Posterior cingulate gyrus (tissue), 11 donors: ENCODE measurements at regions of chr1 and their contacts with region 1.

Region 1: DNA sequence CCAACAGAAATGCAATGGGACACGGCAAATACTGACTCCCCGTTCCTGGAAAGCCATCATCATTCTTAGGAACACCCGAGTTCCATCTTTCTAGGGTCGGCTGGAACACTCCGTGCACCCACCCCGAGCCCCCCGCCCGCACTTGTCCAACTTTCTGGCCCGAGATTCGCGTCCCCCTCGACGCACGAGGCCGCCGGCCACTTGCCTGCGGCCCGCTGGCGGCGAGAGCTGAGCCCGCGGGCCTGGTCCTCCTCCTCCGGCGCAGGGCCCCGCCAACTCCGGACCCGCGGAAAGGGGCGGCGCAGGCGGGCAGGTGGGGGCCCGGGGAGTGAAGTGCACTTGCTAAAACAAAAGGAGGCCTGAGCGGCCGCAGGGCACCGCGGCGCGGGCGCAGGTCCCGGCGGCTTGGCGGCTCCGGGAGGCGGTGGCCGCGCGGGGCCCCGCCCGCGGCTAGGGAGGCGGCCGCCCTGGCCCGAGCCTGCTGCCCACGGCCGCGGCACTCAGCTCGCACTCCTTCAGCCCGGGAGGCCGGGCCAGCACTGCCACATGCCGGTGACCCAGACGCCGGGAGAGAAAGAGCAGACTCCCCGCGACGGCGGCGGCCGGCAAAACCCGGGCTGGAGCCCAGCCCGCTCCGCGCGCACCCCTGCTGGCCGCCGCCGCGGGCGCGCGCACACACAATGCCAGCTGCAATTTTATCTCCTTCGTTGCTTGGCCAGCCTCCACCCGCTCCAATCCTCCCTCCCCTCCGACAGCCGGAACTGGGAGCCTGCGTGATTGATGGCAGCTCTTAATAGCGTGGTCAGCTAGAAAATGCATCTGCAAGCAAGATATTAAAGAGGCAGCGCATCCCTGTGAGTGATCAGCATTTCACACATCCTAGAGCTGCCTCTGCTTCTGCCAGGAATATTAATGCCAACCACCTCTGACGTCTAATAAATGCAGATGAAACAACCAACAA is 114.3 kb downstream of the RERE start:
- DNase-seq: peak; percentile 85 to 99 (median 88)

Region 2: DNA sequence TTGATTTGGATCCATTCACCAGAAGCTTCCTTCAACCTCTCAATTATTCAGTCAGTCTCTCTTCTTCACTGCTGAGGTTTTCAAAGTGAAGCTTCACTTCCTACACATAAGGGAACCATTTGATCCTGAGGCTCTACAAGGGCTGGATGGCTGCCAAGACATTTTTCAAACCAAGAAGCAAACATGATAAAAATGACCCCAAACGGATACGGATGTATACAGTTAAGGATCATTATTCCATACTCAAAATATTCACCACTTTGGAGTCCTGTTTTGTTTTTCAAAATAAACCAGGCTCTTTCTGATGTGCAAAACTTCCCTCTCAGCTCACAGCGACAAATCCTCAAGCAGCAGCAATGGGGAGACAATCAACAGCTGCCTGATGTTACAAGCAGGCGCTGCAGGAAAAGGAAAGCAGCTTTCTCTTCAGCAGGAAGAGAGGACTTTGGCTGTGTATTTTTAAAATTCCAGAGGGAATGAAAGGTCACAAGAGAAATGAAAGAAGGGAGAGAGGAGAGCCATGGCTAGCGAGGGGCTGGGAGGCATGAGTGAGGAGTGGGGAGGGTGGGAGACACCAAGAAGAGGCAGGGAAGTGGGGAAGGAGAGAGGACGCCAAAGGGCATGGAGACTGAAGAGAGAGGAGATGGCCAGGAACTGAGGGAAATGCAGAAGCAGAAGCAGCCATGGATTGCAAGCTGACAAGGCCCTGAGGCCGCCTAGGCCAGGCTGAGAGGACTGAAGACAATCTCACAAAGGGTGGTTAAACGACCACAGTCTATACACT is 239.8 kb before region 1 on chr1:
- intact Hi-C with region 1: loop called (anchors 10 kb)
- DNase-seq: no peak

Region 3: DNA sequence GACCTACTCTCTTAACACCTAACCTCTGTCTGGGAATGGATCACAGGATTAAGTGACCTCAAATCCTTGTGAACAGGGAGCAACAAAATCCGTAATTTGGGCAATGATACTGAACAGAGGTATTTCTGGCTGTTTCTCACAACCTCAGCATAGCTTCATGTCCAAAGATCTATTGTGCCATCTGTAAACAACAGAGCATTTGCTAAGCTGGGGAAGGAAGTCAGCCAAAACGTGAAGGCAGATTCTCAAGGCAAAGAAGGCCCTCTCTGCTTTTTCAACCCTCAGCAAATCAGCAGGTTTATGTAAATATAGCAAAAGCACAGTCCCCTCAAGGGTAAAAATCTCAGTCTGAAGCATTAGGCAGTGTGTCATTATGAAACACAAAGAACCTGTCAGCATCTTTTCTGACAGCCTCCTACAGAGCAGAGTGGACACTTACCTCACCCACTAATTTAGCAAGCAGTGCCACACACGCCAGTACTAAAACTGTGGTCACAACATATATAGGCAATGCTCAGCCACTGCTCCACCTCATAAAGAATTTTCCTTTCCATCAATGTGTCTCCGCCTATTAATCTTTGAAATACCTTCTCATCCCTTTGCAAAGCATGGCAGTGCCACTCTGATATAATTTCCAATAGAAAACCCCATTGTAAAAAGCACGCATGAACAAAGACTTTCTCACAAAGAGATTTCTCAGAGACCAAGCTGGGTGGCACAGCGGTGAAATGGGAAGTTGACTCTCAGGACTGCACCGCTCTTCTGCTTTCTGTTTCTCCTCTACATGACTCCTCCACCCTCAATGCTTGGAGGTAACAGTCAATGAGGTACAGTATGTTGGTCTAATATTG is 73.7 kb before region 1 on chr1:
- intact Hi-C with region 1: loop called (anchors 5 kb)
- DNase-seq: peak in 2 of 10 donors; percentile 14 to 34

Region 4: GRCh38 chr1:8680664-8681650 is 22.2 kb before region 1 on chr1:
- intact Hi-C with region 1: loop called (anchors 2 kb)
- DNase-seq: no peak

Region 5: GRCh38 chr1:8817406-8818324 is 114.5 kb after region 1 on chr1 and contains the start of gene RERE:
- intact Hi-C with region 1: loop called (anchors 10 kb)
- DNase-seq: peak; percentile 89 to 99 (median 93)

Region 6: GRCh38 chr1:8941906-8942305 is 238.8 kb after region 1 on chr1:
- intact Hi-C with region 1: no loop called
- DNase-seq: no peak